Activated CD8-positive, alpha-beta T cell treated with anti-CD3 and anti-CD28 coated beads for 36 hours (primary cell): ENCODE measurements at regions of chr1 and their contacts with region 1.

Region 1: DNA sequence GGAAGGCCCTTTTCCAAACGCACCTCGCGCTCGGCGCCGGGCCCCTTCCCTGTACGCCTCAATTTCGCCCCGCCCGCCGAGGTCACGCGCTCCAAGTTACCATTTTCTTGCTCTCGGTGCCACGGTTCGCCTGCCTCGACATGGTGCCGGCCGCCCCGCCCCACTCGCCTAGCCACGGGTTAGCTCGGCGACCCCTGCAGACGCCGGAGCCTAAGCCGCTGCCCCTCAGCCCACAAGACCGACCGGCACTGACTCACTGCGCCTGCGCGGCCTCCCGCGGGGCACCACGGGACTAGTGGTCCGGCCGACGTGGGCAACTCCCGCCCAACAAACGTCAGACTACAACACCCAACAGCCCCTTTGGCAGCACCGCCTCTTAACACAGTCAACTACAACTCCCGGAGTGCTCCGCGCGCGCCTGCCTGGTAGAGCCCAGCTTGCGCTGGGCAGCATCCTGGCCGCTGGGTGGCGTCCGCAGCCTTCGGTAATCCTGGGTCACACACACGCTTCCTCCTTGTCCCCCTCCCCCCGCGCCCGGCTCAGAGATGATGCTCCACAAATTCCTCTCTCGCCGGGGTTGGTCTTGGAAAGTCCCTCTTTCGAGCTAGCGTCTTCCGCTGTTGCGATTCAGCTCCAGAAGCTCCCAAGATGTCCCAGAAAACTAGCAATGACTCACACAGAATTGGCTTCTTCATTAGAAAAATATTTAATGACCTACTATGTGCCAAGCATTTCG is at the start of gene TRAPPC3:
- DNase-seq: peak; percentile 100
- ATAC-seq: peak; percentile 92
- H3K4me3 Mint-ChIP-seq: peak within 1 kb of the TSS; percentile 100
- H3K27ac Mint-ChIP-seq: peak within 1 kb of the TSS; percentile 97
- H3K4me1 Mint-ChIP-seq: peaks cover 60% of the 10 kb centered on the region
- H3K27me3 Mint-ChIP-seq: no peaks in the 10 kb centered on the region
- CTCF ChIP-seq: peak; percentile 70
- total RNA-seq, gene TRAPPC3: 47.9 to 48.4 TPM

Region 2: DNA sequence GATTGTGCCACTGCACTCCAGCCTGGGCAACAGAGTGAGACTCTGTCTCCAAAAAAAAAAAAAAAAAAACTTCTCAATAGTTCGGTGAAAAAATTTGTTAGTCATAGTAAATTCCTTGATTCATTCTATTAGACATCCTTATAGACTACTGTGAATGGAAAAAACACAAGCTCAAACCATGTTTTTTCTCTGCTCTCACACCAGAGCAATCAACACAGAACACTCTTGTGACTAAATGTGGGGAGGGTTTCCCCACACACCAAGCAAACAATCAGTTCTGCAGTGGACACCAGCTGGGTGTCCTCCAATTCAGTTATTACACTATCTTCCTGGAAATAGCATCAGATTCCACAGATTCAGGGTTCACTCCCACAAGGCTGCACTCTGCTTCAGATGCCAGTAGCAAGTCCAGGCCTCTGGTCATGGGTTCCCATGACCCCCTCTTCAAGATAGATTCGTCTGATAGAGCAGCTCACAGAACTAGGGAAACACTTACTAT is 134.6 kb before region 1 on chr1:
- CTCF ChIA-PET with region 1: no interaction called
- POLR2A ChIA-PET with region 1: no interaction called
- intact Hi-C with region 1: no loop called
- DNase-seq: no peak
- ATAC-seq: no peak
- H3K4me3 Mint-ChIP-seq: no peak overlapping the region
- H3K27ac Mint-ChIP-seq: no peak overlapping the region
- H3K4me1 Mint-ChIP-seq: no peaks in the 10 kb centered on the region
- H3K27me3 Mint-ChIP-seq: no peaks in the 10 kb centered on the region
- CTCF ChIP-seq: no peak

Region 3: GRCh38 chr1:36134505-36135329 is 14.7 kb before region 1 on chr1:
- CTCF ChIA-PET with region 1: interaction called, 48 read pairs
- POLR2A ChIA-PET with region 1: interaction called, 4 read pairs
- intact Hi-C with region 1: no loop called
- DNase-seq: peak; percentile 75
- ATAC-seq: peak; percentile 89
- H3K4me3 Mint-ChIP-seq: no peak overlapping the region
- H3K27ac Mint-ChIP-seq: peak overlapping the region; percentile 28
- H3K4me1 Mint-ChIP-seq: no peaks in the 10 kb centered on the region
- H3K27me3 Mint-ChIP-seq: no peaks in the 10 kb centered on the region
- CTCF ChIP-seq: peak; percentile 90

Region 4: GRCh38 chr1:36172983-36173382 is 23.6 kb after region 1 on chr1:
- CTCF ChIA-PET with region 1: interaction called, 15 read pairs
- POLR2A ChIA-PET with region 1: interaction called, 6 read pairs
- intact Hi-C with region 1: no loop called
- DNase-seq: no peak
- ATAC-seq: no peak
- H3K4me3 Mint-ChIP-seq: no peak overlapping the region
- H3K27ac Mint-ChIP-seq: no peak overlapping the region
- H3K4me1 Mint-ChIP-seq: peaks cover 8% of the 10 kb centered on the region
- H3K27me3 Mint-ChIP-seq: no peaks in the 10 kb centered on the region
- CTCF ChIP-seq: no peak

Region 5: GRCh38 chr1:36223993-36224536 is 74.7 kb after region 1 on chr1 and contains the start of gene THRAP3:
- CTCF ChIA-PET with region 1: interaction called, 33 read pairs
- POLR2A ChIA-PET with region 1: interaction called, 20 read pairs
- intact Hi-C with region 1: loop called (anchors 2 kb)
- DNase-seq: peak; percentile 100
- ATAC-seq: peak; percentile 91
- H3K4me3 Mint-ChIP-seq: peak within 1 kb of the TSS; percentile 85
- H3K27ac Mint-ChIP-seq: peak within 1 kb of the TSS; percentile 99
- H3K4me1 Mint-ChIP-seq: peaks cover 27% of the 10 kb centered on the region
- H3K27me3 Mint-ChIP-seq: no peaks in the 10 kb centered on the region
- CTCF ChIP-seq: no peak
- total RNA-seq, gene THRAP3: 119 to 121 TPM

Region 6: DNA sequence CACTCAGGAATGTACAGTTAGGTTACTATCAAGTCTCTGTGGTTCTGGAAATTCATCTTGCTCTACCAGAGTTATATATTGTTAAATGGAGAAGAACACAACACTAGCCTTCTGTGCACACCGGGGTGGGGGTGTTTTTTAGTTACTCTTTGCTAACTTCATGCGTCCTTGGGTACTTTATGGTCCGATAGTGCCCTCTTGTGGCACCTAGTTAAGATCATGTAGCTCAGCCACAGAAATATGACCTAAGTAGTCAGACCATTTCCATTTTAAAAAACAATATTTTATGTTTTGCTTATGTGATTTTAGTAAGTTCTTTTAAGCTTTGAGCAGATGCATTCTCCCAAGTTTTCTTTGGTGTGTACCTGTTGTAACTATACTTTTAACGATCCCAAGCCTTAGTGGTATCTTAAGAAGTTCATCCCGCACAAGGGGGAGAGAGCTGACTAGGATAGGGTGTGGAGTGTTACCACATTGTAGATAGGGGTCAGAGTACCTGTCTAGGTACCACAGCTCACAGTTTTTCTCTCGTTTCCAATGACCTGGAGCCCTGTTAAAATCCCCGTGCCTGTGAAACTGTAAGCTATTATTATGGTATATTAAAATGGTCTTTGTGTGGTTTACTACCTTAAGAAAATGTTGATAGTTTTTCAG is 136.2 kb after region 1 on chr1:
- CTCF ChIA-PET with region 1: interaction called, 55 read pairs
- POLR2A ChIA-PET with region 1: interaction called, 5 read pairs
- intact Hi-C with region 1: loop called (anchors 5 kb)
- DNase-seq: peak; percentile 86
- ATAC-seq: peak; percentile 86
- H3K4me3 Mint-ChIP-seq: no peak overlapping the region
- H3K27ac Mint-ChIP-seq: peak overlapping the region; percentile 58
- H3K4me1 Mint-ChIP-seq: peaks cover 32% of the 10 kb centered on the region
- H3K27me3 Mint-ChIP-seq: no peaks in the 10 kb centered on the region
- CTCF ChIP-seq: peak; percentile 76

Region 7: GRCh38 chr1:36420836-36421664 is 271.6 kb after region 1 on chr1:
- CTCF ChIA-PET with region 1: interaction called, 11 read pairs
- POLR2A ChIA-PET with region 1: no interaction called
- intact Hi-C with region 1: no loop called
- DNase-seq: peak; percentile 95
- ATAC-seq: peak; percentile 100
- H3K4me3 Mint-ChIP-seq: no peak overlapping the region
- H3K27ac Mint-ChIP-seq: peak overlapping the region; percentile 91
- H3K4me1 Mint-ChIP-seq: peaks cover 16% of the 10 kb centered on the region
- H3K27me3 Mint-ChIP-seq: no peaks in the 10 kb centered on the region
- CTCF ChIP-seq: peak; percentile 94